Calu3 (cell line): ENCODE measurements at regions of chr4 and their contacts with region 1.

Region 1: DNA sequence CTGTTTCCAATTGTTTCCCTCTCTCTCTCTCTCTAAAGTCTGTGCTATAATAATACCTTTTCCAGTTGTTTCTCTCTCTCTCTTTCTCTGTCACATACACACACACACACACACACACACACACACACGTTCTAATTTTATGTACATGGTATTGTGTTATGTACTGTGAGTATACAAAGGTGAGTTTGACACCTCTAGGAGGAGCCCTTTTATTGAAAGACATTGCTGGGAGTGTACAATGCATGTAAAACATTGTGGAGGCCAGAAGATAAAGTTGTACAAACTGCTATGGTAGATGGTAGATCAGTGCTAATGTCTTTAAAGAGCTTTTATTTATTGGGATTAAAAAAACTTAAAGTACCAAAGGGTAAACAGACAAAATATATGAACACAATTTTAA is 53.6 kb downstream of the BLTP1 start:
- DNase-seq: no peak
- H3K4me3 Mint-ChIP-seq: no peak overlapping the region
- H3K27ac Mint-ChIP-seq: no peak overlapping the region
- H3K4me1 Mint-ChIP-seq: no peaks in the 10 kb centered on the region
- H3K27me3 Mint-ChIP-seq: no peaks in the 10 kb centered on the region
- CTCF ChIP-seq: no peak

Region 2: DNA sequence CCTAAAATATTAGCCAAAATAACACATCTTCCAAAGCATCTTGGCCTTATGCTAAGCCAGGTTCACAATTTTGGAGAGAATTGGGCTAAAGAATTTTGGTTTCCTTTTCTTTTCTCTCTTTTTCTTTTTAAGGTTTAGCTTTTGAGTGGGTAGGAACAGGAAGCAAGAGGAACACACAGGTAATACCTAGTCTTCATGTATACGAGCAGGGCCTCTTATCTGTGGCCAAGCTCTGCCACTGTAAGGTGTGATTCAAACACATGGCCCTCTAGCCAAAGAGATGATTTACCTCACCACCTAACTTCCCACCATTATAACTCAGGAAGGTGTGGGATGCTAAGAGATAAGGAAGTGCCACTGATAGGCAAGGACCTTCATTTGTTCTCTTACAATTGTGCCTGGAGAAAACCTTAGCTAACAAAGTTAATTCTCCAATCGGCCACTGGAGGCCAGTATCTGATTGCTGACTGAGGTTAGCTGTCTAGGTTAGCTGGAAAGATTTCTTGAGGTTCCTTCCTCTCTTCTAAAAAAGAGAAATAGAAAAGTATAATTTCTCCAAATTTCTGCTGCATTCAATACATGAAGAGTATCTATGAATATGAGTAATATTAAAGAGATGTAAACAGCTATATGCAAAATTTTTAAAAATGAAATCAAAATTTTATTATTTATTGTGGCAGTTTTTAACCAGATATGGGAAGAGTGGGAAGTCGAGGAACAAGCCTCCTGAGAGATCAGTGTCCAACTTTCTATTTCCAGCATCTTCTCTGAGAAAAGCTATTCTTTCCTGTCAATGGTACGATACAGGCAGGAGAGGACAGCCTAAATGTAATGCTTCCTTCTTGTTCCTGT is 305.3 kb before region 1 on chr4:
- CTCF ChIA-PET with region 1: no interaction called
- intact Hi-C with region 1: loop called (anchors 10 kb)
- DNase-seq: peak; percentile 39
- H3K4me3 Mint-ChIP-seq: no peak overlapping the region
- H3K27ac Mint-ChIP-seq: no peak overlapping the region
- H3K4me1 Mint-ChIP-seq: no peaks in the 10 kb centered on the region
- H3K27me3 Mint-ChIP-seq: no peaks in the 10 kb centered on the region
- CTCF ChIP-seq: no peak